Sciatic nerve (tissue), 2 donors: ENCODE measurements at regions of chr4 and their contacts with region 1.

Region 1: GRCh38 chr4:139783741-139784484 is 118.3 kb downstream of the MGST2 start:
- DNase-seq: no peak
- ATAC-seq: peak; percentile 83

Region 2: GRCh38 chr4:139844057-139844456 is 60.1 kb after region 1 on chr4:
- intact Hi-C with region 1: loop called (anchors 2 kb)
- DNase-seq: no peak
- ATAC-seq: no peak

Region 3: DNA sequence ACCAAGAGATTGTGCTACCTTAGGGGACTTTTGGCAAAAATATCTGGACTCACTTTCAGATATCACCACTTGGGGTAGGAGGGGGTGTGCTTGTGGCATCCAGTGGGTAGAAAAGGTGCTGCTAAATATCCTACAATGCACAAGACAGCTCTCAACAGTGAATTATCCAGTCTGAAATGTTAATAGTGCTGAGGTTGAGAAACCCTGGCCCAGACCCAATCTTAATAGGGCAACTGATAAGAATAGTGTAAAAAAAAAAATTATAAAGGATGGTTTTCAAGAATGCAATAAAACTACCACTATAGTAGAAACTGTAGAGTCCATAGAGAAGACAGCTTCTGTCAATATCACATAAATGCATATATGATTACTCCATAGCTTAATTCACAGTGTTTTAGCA is 1622.3 kb after region 1 on chr4:
- intact Hi-C with region 1: no loop called
- DNase-seq: no peak
- ATAC-seq: no peak